Kidney (tissue), 22 donors: ENCODE measurements at regions of chr1 and their contacts with region 1.

Region 1: GRCh38 chr1:47437447-47438164 is at the start of gene FOXD2:
- DNase-seq: peak; percentile 94 to 96 (median 95)
- H3K4me3 ChIP-seq: peak within 1 kb of the TSS; percentile 45 to 52 (median 47)
- H3K27ac ChIP-seq: peak within 1 kb of the TSS; percentile 72 to 76
- H3K4me1 ChIP-seq: peaks cover 0 to 6% (median 4%) of the 10 kb centered on the region in 3 donors
- H3K27me3 ChIP-seq: peaks cover 29% of the 10 kb centered on the region
- CTCF ChIP-seq: peak; percentile 55
- total RNA-seq, gene FOXD2: 0.82 TPM

Region 2: GRCh38 chr1:47333922-47334764 is 103.5 kb before region 1 on chr1:
- intact Hi-C with region 1: no loop called
- DNase-seq: peak; percentile 79 to 94 (median 92)
- H3K4me3 ChIP-seq: peak overlapping the region; percentile 84 to 90 (median 85)
- H3K27ac ChIP-seq: peak overlapping the region; percentile 97 to 98
- H3K4me1 ChIP-seq: peaks cover 0 to 14% (median 5%) of the 10 kb centered on the region in 3 donors
- H3K27me3 ChIP-seq: no peaks in the 10 kb centered on the region
- CTCF ChIP-seq: no peak

Region 3: GRCh38 chr1:47561523-47562007 is 124.0 kb after region 1 on chr1:
- intact Hi-C with region 1: loop called (anchors 5 kb)
- DNase-seq: no peak
- H3K4me3 ChIP-seq: no peak overlapping the region
- H3K27ac ChIP-seq: no peak overlapping the region
- H3K4me1 ChIP-seq: peaks cover 7 to 21% (median 13%) of the 10 kb centered on the region in 3 donors
- H3K27me3 ChIP-seq: no peaks in the 10 kb centered on the region
- CTCF ChIP-seq: no peak

Region 4: DNA sequence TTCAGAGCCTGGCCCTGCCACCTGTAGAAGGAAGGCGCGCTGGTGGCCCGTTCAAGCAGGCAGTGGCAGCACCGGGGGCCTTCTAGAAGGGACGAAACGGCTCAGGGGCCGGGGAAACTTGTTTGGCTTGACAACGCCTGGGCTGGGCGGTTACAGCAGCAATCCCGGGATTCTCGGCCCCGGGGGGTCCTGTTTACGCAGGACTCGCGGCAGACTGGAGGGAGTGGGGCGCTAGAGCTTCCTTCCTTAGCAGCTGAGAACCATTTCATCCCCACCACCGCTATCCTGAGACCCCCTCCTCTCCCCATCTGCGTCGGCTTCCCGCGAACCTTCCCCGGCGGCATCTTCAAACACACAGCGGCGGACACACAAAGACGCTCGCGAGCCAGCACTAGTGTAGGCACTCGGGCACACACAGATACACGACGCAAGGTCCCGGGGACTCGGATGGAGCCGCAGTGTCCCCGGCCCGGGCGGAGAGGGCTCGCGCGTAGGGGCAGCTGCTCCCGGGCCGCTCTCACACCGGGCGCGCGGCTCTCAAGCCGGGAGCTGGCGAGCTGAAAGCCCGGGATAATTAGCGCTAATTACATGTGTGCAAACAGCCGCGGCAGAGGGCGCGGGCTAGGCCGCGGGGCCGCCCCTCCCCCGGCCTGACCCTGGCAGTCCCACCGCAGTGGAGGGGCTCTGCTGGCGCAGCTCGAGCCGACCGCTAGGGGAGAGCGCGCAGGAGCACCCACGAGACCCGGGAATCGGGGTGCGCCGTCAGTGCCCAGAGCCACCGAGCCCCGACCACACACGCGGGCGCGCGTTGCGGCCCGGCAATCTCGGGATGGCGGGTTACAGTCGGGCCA is 271.6 kb after region 1 on chr1:
- intact Hi-C with region 1: loop called (anchors 5 kb)
- DNase-seq: peak in 4 of 5 donors; percentile 66 to 82 (median 71)
- H3K4me3 ChIP-seq: peak overlapping the region in 2 of 3 donors; percentile 20 to 43
- H3K27ac ChIP-seq: no peak overlapping the region
- H3K4me1 ChIP-seq: peaks cover 0 to 10% (median 0%) of the 10 kb centered on the region in 3 donors
- H3K27me3 ChIP-seq: peaks cover 8% of the 10 kb centered on the region
- CTCF ChIP-seq: no peak